Breast epithelium (tissue), 4 donors: ENCODE measurements at regions of chr4 and their contacts with region 1.

Region 1: DNA sequence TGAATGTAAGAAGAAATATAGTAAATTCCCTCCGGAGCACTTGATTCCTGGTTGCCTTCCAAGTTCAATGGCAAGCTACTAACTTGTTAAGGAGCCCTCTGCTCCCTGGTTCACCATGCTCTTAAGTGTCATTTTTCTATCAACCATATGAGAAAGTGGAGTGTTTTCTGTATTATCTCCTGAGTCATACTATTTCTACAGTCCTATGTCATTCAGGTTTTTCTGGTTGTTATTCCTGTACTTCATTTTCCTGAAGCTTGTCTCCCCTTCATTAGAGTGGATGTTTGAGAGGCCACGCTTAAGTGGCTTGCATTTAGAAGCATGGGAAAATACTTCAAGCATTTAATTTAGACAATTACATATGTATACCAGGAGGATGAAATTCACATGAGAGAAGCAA is 14.7 kb upstream of the EPGN start:
- DNase-seq: no peak
- H3K4me3 ChIP-seq: no peak overlapping the region
- H3K27ac ChIP-seq: no peak overlapping the region
- H3K4me1 ChIP-seq: no peaks in the 10 kb centered on the region
- H3K27me3 ChIP-seq: no peaks in the 10 kb centered on the region
- CTCF ChIP-seq: no peak
- POLR2A ChIP-seq: no peak

Region 2: DNA sequence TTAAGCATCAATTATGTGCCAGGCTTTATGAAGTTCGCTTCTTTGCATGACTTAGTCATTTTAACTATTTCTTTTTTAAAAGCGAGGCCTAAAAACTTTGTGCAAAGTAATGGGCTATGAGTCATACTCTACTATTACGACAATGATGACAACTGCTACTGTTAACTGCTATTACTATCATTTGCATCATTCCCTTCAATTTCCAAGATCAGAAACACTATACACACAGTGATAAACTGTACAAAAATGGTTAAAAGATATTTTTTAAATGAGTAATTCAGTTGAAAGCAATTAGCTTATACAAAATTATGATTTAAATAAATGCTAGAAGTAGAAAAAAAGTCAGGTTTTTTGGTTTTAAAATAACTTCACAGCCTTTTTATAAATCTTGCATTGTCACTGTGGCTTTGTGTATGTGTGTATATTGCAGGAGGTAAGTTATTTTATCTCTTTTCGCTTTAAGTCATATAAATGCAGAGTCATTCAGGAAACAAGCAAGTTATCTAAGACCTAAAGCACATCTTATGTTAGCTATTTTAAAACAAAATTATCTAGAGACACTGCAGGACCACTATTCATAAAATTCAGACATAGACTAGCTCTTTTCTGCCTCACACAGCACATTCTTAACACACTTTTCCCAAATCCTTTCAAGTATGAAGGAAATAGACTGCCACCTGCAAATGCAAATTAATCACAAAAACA is 236.5 kb before region 1 on chr4:
- intact Hi-C with region 1: no loop called
- DNase-seq: no peak
- H3K4me3 ChIP-seq: no peak overlapping the region
- H3K27ac ChIP-seq: no peak overlapping the region
- H3K4me1 ChIP-seq: no peaks in the 10 kb centered on the region
- H3K27me3 ChIP-seq: no peaks in the 10 kb centered on the region
- CTCF ChIP-seq: no peak
- POLR2A ChIP-seq: no peak

Region 3: GRCh38 chr4:74230902-74231499 is 62.6 kb before region 1 on chr4:
- intact Hi-C with region 1: loop called (anchors 2 kb)
- DNase-seq: no peak
- H3K4me3 ChIP-seq: no peak overlapping the region
- H3K27ac ChIP-seq: no peak overlapping the region
- H3K4me1 ChIP-seq: no peaks in the 10 kb centered on the region
- H3K27me3 ChIP-seq: no peaks in the 10 kb centered on the region
- CTCF ChIP-seq: no peak
- POLR2A ChIP-seq: no peak